Ovary (tissue), 10 donors: ENCODE measurements at regions of chr9 and their contacts with region 1.

Region 1: DNA sequence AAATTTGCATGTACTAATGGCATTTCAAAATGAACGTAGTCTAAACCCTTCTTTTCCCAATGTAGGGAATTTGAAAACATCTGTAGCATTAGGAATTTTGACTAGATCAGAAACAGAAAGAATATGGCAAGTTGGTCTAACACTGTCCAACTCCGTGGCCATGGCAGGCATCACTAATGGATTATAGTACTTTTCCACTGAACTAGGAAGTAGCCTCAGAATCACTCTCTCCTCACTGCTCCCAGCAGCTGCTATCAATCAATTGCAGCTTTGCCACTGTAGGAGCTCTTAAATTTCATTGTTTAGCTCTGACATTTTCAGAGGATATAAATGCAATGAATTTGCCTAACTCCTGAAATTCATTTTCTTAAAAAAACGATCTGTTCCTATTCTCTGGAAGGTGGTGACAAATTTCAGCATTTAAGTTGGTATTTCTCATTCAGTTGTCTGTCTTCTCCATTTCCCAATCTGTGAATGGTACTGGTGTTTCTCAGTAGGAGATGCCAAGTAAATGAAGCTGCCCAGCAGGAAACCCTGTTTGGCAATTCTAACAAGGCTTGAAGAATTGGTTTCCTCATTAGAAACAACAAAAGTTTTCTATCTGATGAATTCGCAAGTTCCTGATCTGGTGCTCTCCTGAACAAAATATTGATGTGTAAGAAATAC is 64.7 kb downstream of the TLR4 start:
- DNase-seq: no peak
- H3K4me3 ChIP-seq: no peak overlapping the region
- H3K27ac ChIP-seq: no peak overlapping the region
- H3K4me1 ChIP-seq: no peaks in the 10 kb centered on the region
- H3K27me3 ChIP-seq: no peaks in the 10 kb centered on the region
- CTCF ChIP-seq: no peak
- EP300 ChIP-seq: no peak
- POLR2A ChIP-seq: no peak

Region 2: GRCh38 chr9:117665601-117666385 is 103.1 kb before region 1 on chr9:
- intact Hi-C with region 1: loop called in 1 of 4 experiments (anchors 5 kb)
- DNase-seq: no peak
- H3K4me3 ChIP-seq: no peak overlapping the region
- H3K27ac ChIP-seq: no peak overlapping the region
- H3K4me1 ChIP-seq: no peaks in the 10 kb centered on the region
- H3K27me3 ChIP-seq: no peaks in the 10 kb centered on the region
- CTCF ChIP-seq: no peak
- EP300 ChIP-seq: no peak
- POLR2A ChIP-seq: no peak

Region 3: GRCh38 chr9:117704024-117704575 is 64.8 kb before region 1 on chr9 and contains the start of gene TLR4:
- intact Hi-C with region 1: no loop called
- DNase-seq: peak; percentile 27 to 52 (median 44)
- H3K4me3 ChIP-seq: peak within 1 kb of the TSS; percentile 27
- H3K27ac ChIP-seq: peak within 1 kb of the TSS in 1 of 2 donors; percentile 65
- H3K4me1 ChIP-seq: peaks cover 3% of the 10 kb centered on the region
- H3K27me3 ChIP-seq: no peaks in the 10 kb centered on the region
- CTCF ChIP-seq: no peak
- EP300 ChIP-seq: no peak
- POLR2A ChIP-seq: no peak
- total RNA-seq, gene TLR4: 4.1 to 12.5 (median 8.9) TPM

Region 4: GRCh38 chr9:118108971-118109370 is 340.1 kb after region 1 on chr9:
- intact Hi-C with region 1: no loop called
- DNase-seq: no peak
- H3K4me3 ChIP-seq: no peak overlapping the region
- H3K27ac ChIP-seq: no peak overlapping the region
- H3K4me1 ChIP-seq: no peaks in the 10 kb centered on the region
- H3K27me3 ChIP-seq: no peaks in the 10 kb centered on the region
- CTCF ChIP-seq: no peak
- EP300 ChIP-seq: no peak
- POLR2A ChIP-seq: no peak